GM10248 (cell line): ENCODE measurements at regions of chr12 and their contacts with region 1.

Region 1: GRCh38 chr12:100234598-100235304 is 32.1 kb downstream of the DEPDC4 start:
- DNase-seq: peak; percentile 30
- CTCF ChIP-seq: peak; percentile 82

Region 2: GRCh38 chr12:100185361-100185894 is 49.3 kb before region 1 on chr12:
- CTCF ChIA-PET with region 1: no interaction called
- POLR2A ChIA-PET with region 1: no interaction called
- DNase-seq: no peak
- CTCF ChIP-seq: no peak

Region 3: DNA sequence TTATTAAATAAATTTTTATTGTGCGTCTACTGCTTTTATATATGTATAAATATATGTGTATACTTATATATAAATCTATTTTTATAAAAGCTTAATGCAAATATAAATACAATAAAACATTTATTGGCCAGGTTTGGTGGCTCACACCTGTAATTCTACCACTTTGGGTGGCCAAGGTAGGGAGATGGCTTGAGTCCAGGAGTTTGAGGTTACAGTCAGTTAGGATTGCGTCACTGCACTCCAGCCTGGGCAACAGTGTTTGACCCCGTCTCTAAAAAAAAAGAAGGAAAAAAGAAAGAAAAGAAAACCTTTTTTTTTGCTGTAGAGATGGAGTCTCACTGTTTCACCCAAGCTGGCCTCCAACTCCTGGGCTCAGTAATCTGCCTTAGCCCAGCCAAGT is 13.2 kb before region 1 on chr12:
- CTCF ChIA-PET with region 1: interaction called, 10 read pairs
- POLR2A ChIA-PET with region 1: no interaction called
- DNase-seq: no peak
- CTCF ChIP-seq: no peak

Region 4: DNA sequence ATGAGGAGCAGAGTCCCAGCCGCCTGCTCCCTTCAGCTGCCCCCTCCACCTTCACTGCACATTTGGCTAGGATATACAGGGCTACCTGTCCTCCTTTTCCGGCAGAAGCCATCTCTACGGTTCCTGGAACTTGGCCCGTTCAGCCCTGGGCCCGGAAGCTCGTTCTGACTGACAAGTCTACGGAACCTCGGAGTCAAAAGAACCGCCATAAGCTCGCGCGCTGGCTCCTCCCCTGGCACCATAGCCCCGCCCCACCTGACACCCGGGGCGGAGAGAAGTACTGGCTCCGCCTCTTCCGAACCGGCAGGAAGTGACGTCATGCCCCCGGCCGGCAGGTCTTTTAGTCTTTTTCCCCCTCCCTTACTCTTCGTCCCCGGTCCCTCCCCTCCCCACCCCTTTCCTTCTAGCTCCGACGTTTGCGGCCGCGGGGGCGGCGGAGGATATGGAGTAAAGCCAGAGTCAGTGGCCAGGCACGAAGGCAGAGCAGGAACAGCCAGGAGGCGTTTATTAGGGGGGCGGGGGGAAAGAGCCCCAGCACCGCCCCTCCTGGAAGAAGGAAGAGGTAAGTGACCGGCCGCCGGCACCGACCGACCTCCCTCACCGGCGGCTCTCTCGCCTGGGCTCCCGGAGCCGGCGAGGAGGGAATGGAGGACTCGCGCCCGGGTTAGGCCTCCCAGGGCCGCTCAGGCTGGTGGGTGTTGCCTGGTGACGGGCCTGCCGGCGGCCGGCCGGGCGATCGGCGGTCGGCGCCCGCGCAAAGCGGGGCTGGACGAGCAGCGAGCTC is 32.3 kb after region 1 on chr12 and contains the starts of genes DEPDC4 and SCYL2:
- CTCF ChIA-PET with region 1: no interaction called
- POLR2A ChIA-PET with region 1: no interaction called
- DNase-seq: peak; percentile 94
- CTCF ChIP-seq: no peak

Region 5: DNA sequence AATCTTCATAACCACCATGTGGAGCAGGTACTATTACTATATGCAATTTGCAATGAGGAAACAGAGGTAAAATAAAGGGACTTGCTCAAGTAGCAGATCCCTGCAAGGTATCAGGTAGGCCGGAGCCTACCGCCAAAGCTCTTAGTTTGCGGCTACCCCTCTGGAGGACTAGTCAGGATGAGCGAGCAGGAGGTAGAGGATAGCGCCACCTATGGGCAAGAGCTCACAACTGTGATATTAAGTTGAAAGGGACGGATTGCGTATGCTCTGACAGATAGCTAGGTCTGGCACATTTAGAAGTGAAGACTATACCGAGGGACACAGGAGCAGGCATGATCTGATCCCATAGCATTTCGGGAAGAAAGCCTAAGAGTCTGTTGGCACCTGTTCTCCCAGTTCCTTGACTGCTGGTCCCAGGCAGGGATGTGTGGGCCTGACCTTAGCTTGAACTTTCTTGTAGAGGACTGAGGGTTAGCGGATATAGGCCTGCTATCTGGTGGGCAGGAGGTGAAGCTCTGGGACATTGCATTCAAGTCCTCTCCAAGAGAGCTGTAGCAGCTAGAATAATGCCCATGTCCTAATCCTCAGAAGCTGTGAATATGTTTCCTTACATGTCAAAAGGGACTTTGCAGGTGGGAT is 170.1 kb after region 1 on chr12:
- CTCF ChIA-PET with region 1: interaction called, 29 read pairs
- POLR2A ChIA-PET with region 1: no interaction called
- DNase-seq: peak; percentile 32
- CTCF ChIP-seq: peak; percentile 62

Region 6: DNA sequence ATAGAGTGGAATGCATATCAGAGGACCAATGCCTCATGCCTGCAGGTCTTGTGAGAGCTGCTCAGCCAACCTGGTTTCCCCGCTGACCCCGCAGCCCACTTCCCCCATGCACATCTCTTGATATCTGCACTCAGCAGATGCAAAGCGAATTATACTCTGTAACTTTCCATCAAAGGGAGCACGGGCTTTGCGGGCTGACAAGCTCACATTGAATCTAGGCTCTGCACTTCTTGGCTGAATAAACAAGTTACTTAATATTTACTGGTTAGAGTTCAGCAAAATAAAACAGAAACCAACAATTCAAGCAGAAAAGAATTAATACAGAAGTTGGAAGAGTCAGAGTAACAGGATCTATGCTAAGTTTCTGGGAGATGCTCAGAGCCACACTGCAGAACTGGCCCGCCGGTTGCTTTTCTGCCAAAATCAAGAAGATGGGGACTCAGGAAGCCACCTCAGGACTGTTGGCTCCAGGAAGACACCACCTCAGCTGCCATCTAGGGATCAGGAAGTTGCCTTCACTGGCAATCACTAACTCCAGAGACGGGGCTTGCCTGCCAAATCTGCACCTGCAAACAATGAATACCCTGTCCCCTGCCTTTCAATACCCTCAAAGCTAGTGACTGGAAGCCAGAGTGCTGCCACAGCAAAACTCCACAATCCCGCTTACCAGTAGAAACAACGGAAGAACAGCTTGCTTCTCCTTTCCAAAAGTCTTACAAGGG is 285.5 kb after region 1 on chr12:
- CTCF ChIA-PET with region 1: no interaction called
- POLR2A ChIA-PET with region 1: no interaction called
- DNase-seq: no peak
- CTCF ChIP-seq: no peak

Region 7: GRCh38 chr12:100554608-100555077 is 319.9 kb after region 1 on chr12:
- CTCF ChIA-PET with region 1: interaction called, 29 read pairs
- POLR2A ChIA-PET with region 1: no interaction called
- DNase-seq: no peak
- CTCF ChIP-seq: peak; percentile 49

Region 8: DNA sequence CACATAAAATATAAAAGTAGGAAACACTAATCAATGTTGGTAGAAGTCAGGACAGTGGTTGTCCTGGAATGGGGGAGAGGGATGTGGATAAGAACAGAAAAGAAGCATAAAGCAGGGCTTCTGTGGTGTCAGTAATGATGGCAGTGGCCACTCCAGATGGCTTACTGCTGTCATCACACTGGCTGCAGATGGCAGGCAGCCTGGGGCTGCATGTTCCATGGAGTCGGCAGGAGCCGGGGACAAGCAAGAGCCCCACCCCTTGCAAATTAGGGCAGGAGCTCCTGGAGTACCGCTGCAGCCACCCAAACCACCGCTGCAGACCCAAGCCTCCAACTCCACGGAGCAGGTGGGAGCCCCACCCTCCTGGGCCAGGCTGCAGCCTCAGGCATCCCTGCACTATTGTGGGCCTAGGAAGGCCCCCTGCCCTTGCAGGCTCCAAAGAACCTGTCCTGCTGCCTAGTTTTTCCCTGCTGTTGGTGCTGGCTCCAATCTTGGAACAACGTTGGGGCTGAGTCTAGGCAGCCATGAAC is 1004.1 kb after region 1 on chr12:
- CTCF ChIA-PET with region 1: no interaction called
- POLR2A ChIA-PET with region 1: no interaction called
- DNase-seq: no peak
- CTCF ChIP-seq: no peak